Stomach (tissue), 19 donors: ENCODE measurements at regions of chr6 and their contacts with region 1.

Region 1: DNA sequence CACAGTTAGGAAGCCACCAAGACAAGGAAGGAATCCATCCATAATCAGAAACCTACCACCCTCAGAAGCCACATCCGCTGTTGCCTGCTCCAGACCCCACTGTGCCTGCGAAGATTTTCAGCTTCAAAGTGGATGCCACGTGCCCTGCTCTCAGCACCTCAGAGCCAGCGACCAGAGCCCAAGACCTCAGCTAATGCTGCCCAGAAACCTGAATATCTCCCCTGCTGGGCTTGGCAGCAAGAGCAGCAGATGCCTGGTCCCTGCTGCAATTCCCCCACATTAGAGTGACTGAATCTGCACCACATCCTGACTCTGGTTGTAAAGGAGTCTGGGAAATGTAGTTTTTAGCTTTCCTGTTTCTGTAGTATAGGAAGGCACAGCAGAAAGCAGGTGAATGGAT is 10.7 kb upstream of the ULBP3 start:
- DNase-seq: no peak
- H3K4me3 ChIP-seq: no peak overlapping the region
- H3K27ac ChIP-seq: no peak overlapping the region
- H3K4me1 ChIP-seq: peaks cover 0 to 4% (median 1%) of the 10 kb centered on the region in 4 donors
- H3K27me3 ChIP-seq: peaks cover 0 to 27% (median 0%) of the 10 kb centered on the region in 3 donors
- CTCF ChIP-seq: no peak
- EP300 ChIP-seq: no peak
- POLR2A ChIP-seq: no peak

Region 2: DNA sequence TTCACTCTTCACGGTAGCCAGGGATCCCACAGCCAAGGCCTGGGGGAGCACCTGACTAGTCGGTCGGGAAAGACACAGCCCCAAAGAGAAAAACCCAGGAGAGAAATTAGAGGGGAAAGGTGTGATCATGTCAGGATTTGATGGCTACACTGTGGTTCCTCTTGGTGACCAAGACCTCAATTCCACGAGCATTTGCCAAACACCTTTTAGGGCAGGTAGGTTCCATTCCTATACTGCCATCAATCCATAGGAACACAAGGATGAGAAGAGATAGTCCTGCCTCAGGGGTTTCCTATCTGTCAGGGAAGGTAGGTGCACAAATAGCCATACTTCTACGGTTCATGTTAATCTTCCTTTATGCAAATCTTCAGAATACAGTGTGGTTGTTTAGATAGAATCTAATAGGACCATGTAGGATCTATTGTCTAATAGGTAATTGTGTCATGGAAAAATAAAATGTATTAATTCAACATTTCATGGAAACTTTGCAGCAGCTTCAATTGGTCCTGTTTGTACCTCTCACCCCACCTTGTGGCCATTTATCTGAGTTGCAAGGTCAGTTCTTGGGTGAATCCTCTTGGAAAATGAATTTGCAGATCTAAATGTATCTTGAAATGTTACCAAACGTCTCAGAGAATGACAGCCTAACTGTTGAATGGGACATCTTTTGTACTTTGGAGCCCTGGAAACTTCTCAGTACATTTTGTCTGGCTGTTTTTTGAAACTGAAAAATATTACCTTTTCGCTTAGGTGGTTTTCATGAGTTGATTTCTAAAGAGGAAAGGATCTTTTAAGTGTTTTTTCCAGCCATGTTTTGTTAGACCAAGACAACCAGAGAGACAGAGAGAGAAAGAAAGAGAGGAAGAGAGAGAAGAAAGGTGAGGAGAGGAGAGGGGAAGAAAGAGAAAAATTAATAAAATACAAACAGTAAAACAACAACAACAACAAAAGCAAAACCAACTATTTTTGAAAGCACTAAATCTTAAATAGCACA is 255.5 kb after region 1 on chr6:
- intact Hi-C with region 1: loop called (anchors 5 kb)
- DNase-seq: peak in 1 of 2 donors; percentile 82
- H3K4me3 ChIP-seq: no peak overlapping the region
- H3K27ac ChIP-seq: no peak overlapping the region
- H3K4me1 ChIP-seq: no peaks in the 10 kb centered on the region
- H3K27me3 ChIP-seq: no peaks in the 10 kb centered on the region
- CTCF ChIP-seq: peak in 5 of 7 experiments; percentile 43 to 74 (median 69)
- EP300 ChIP-seq: no peak
- POLR2A ChIP-seq: no peak

Region 3: DNA sequence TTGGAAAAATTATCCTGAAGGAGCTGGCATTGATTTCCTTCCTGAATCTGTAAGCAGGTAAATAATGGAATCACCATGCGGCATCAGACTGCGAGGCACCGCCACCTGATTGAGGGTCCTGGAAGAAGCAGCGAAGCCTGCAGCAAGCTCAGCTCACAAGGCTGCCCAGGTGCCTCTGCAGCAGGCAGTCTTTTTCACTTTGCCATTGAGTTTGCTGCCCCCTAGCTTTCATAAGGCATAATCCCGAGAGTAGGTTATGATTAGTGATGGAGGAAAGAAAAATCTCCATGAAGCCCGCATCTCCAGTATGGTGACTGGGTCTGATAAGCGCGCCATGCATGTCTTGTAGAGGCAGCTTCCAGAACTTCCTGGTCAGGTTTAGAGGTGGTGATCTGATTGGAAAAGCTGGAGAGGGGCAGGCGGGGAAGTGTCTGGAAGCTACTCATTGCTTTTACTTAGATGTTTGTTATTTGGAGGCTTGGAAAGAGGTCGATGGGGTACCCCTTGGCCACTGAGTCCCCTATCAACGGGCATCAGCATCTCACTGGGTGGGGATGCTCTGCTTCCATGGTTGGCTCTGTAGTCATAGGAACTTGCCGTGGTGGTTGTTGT is 315.9 kb after region 1 on chr6:
- intact Hi-C with region 1: loop called (anchors 10 kb)
- DNase-seq: peak in 1 of 2 donors; percentile 81
- H3K4me3 ChIP-seq: no peak overlapping the region
- H3K27ac ChIP-seq: no peak overlapping the region
- H3K4me1 ChIP-seq: no peaks in the 10 kb centered on the region
- H3K27me3 ChIP-seq: peaks cover 0 to 3% (median 0%) of the 10 kb centered on the region in 3 donors
- CTCF ChIP-seq: peak in 5 of 7 experiments; percentile 42 to 71 (median 57)
- EP300 ChIP-seq: no peak
- POLR2A ChIP-seq: no peak

Region 4: GRCh38 chr6:150491131-150491810 is 411.7 kb after region 1 on chr6:
- intact Hi-C with region 1: no loop called
- DNase-seq: no peak
- H3K4me3 ChIP-seq: no peak overlapping the region
- H3K27ac ChIP-seq: no peak overlapping the region
- H3K4me1 ChIP-seq: peaks cover 0 to 9% (median 0%) of the 10 kb centered on the region in 4 donors
- H3K27me3 ChIP-seq: no peaks in the 10 kb centered on the region
- CTCF ChIP-seq: no peak
- EP300 ChIP-seq: no peak
- POLR2A ChIP-seq: no peak